MCF 10A (cell line): ENCODE measurements at regions of chr12 and their contacts with region 1.

Region 1: GRCh38 chr12:119681961-119682638 is 14.2 kb downstream of the PRKAB1 start:
- DNase-seq: no peak
- H3K4me3 Mint-ChIP-seq: no peak overlapping the region
- H3K27ac Mint-ChIP-seq: no peak overlapping the region
- H3K4me1 Mint-ChIP-seq: no peaks in the 10 kb centered on the region
- H3K27me3 Mint-ChIP-seq: no peaks in the 10 kb centered on the region
- CTCF ChIP-seq: no peak

Region 2: GRCh38 chr12:119667577-119668323 is 14.3 kb before region 1 on chr12 and contains the start of gene PRKAB1:
- CTCF ChIA-PET with region 1: interaction called, 27 read pairs
- POLR2A ChIA-PET with region 1: interaction called, 11 read pairs
- intact Hi-C with region 1: no loop called
- DNase-seq: peak; percentile 98
- H3K4me3 Mint-ChIP-seq: peak within 1 kb of the TSS; percentile 85
- H3K27ac Mint-ChIP-seq: peak within 1 kb of the TSS; percentile 86
- H3K4me1 Mint-ChIP-seq: peaks cover 19% of the 10 kb centered on the region
- H3K27me3 Mint-ChIP-seq: no peaks in the 10 kb centered on the region
- CTCF ChIP-seq: peak; percentile 86
- total RNA-seq, gene PRKAB1: 22.5 and 27.2 TPM in 2 replicates

Region 3: GRCh38 chr12:119695034-119695433 is 12.9 kb after region 1 on chr12:
- CTCF ChIA-PET with region 1: interaction called, 25 read pairs
- POLR2A ChIA-PET with region 1: interaction called, 4 read pairs
- intact Hi-C with region 1: no loop called
- DNase-seq: peak; percentile 18
- H3K4me3 Mint-ChIP-seq: no peak overlapping the region
- H3K27ac Mint-ChIP-seq: no peak overlapping the region
- H3K4me1 Mint-ChIP-seq: peaks cover 19% of the 10 kb centered on the region
- H3K27me3 Mint-ChIP-seq: no peaks in the 10 kb centered on the region
- CTCF ChIP-seq: peak; percentile 20